Common myeloid progenitor, CD34-positive (primary cell): ENCODE measurements at regions of chr17 and their contacts with region 1.

Region 1: GRCh38 chr17:29279397-29280070 is 14.4 kb downstream of the NUFIP2 start:
- DNase-seq: no peak
- H3K4me3 ChIP-seq: no peak overlapping the region
- H3K27ac ChIP-seq: no peak overlapping the region
- H3K4me1 ChIP-seq: peaks cover 0 to 3% (median 0%) of the 10 kb centered on the region in 4 experiments
- H3K27me3 ChIP-seq: no peaks in the 10 kb centered on the region

Region 2: GRCh38 chr17:29291163-29291752 is 11.7 kb after region 1 on chr17:
- CTCF ChIA-PET with region 1: interaction called, 12 read pairs
- POLR2A ChIA-PET with region 1: interaction called, 3 read pairs
- DNase-seq: peak; percentile 73 to 86 (median 85)
- H3K4me3 ChIP-seq: peak overlapping the region in 6 of 7 experiments; percentile 78 to 100 (median 96)
- H3K27ac ChIP-seq: peak overlapping the region in 1 of 2 experiments; percentile 92
- H3K4me1 ChIP-seq: peaks cover 12 to 42% (median 31%) of the 10 kb centered on the region in 4 experiments
- H3K27me3 ChIP-seq: no peaks in the 10 kb centered on the region

Region 3: GRCh38 chr17:29331075-29331707 is 51.7 kb after region 1 on chr17:
- CTCF ChIA-PET with region 1: no interaction called
- POLR2A ChIA-PET with region 1: no interaction called
- DNase-seq: no peak
- H3K4me3 ChIP-seq: no peak overlapping the region
- H3K27ac ChIP-seq: no peak overlapping the region
- H3K4me1 ChIP-seq: no peaks in the 10 kb centered on the region
- H3K27me3 ChIP-seq: no peaks in the 10 kb centered on the region